ENCODE measurements at regions of chr14 and their contacts with region 1.

Region 1: GRCh38 chr14:60064491-60065072 is 27.1 kb upstream of the PCNX4 start:
- DNase-seq: no peak
- ATAC-seq: peak; percentile 57
- H3K4me3 Mint-ChIP-seq: no peak overlapping the region
- H3K27ac Mint-ChIP-seq: no peak overlapping the region
- H3K4me1 Mint-ChIP-seq: no peaks in the 10 kb centered on the region
- H3K27me3 Mint-ChIP-seq: peaks cover 4% of the 10 kb centered on the region
- CTCF ChIP-seq: peak; percentile 54

Region 2: DNA sequence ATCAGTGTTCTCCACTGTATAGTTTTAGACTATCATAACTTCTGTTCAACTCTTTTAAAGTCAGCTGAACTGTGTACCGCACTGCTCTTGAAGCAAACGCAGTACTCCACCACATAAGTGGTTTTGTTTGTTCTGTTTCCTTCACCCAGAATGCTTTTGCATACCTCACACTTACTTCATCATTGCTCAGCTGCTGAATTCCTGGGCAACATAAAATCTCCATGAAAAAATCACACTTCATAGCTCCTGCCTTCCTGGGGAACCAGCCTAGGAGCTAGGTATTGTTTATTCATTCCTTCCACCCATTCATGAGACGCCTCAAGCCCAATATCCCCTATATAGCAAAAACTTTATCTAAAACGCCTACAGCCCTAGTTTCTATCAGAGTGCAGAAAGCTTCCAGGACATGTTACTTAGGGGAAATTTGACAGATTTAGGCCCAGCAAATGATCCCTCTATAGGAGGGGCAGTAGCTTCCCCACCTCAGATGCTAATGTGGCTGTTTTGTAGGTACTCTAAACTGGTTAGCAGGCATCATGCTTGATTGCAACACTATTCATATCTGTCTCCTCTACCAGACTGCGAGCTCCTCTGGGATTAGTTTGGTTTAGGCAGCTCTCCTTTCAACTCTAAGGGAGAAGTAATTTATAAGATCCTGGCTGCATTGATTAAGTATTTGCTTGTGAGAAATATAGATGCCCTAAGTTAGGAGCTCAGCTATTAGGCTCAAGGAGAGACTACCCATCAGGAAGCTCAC is 100.2 kb before region 1 on chr14:
- CTCF ChIA-PET with region 1: interaction called, 4 read pairs
- POLR2A ChIA-PET with region 1: no interaction called
- intact Hi-C with region 1: loop called (anchors 1 kb)
- DNase-seq: no peak
- ATAC-seq: peak; percentile 25
- H3K4me3 Mint-ChIP-seq: peak overlapping the region; percentile 86
- H3K27ac Mint-ChIP-seq: peak overlapping the region; percentile 93
- H3K4me1 Mint-ChIP-seq: peaks cover 14% of the 10 kb centered on the region
- H3K27me3 Mint-ChIP-seq: no peaks in the 10 kb centered on the region
- CTCF ChIP-seq: no peak

Measured in activated B cell treated with CpG ODN at 0.5 μM for 24 hours (primary cell).